CD4-positive, alpha-beta memory T cell (primary cell): ENCODE measurements at regions of chr1 and their contacts with region 1.

Region 1: GRCh38 chr1:180515864-180516388 is 13.5 kb upstream of the ACBD6 start:
- DNase-seq: peak; percentile 48 to 62 (median 55)
- H3K4me3 ChIP-seq: no peak overlapping the region
- H3K4me3 Mint-ChIP-seq: no peak overlapping the region
- H3K27ac ChIP-seq: no peak overlapping the region
- H3K27ac Mint-ChIP-seq: no peak overlapping the region
- H3K4me1 ChIP-seq: peaks cover 3% of the 10 kb centered on the region
- H3K4me1 Mint-ChIP-seq: peaks cover 0 to 2% (median 1%) of the 10 kb centered on the region in 4 donors
- H3K27me3 ChIP-seq: no peaks in the 10 kb centered on the region
- H3K27me3 Mint-ChIP-seq: peaks cover 4% of the 10 kb centered on the region in 2 donors

Region 2: GRCh38 chr1:180462102-180462501 is 53.8 kb before region 1 on chr1:
- CTCF ChIA-PET with region 1: no interaction called
- POLR2A ChIA-PET with region 1: no interaction called
- intact Hi-C with region 1: no loop called
- DNase-seq: no peak
- H3K4me3 ChIP-seq: no peak overlapping the region
- H3K4me3 Mint-ChIP-seq: peak overlapping the region in 2 of 8 donors; percentile 1 to 26
- H3K27ac ChIP-seq: no peak overlapping the region
- H3K27ac Mint-ChIP-seq: no peak overlapping the region
- H3K4me1 ChIP-seq: no peaks in the 10 kb centered on the region
- H3K4me1 Mint-ChIP-seq: peaks cover 11 to 28% (median 23%) of the 10 kb centered on the region in 4 donors
- H3K27me3 ChIP-seq: no peaks in the 10 kb centered on the region
- H3K27me3 Mint-ChIP-seq: no peaks in the 10 kb centered on the region

Region 3: GRCh38 chr1:180502360-180503273 is 13.3 kb before region 1 on chr1 and contains the start of gene ACBD6:
- CTCF ChIA-PET with region 1: interaction called, 45 read pairs
- POLR2A ChIA-PET with region 1: interaction called, 5 read pairs
- intact Hi-C with region 1: no loop called
- DNase-seq: peak; percentile 86 to 91 (median 88)
- H3K4me3 ChIP-seq: peak within 1 kb of the TSS; percentile 89 to 95
- H3K4me3 Mint-ChIP-seq: peak within 1 kb of the TSS; percentile 96 to 99 (median 98)
- H3K27ac ChIP-seq: peak within 1 kb of the TSS; percentile 71
- H3K27ac Mint-ChIP-seq: peak within 1 kb of the TSS; percentile 92 to 99 (median 97)
- H3K4me1 ChIP-seq: peaks cover 42% of the 10 kb centered on the region
- H3K4me1 Mint-ChIP-seq: peaks cover 23 to 42% (median 31%) of the 10 kb centered on the region in 4 donors
- H3K27me3 ChIP-seq: no peaks in the 10 kb centered on the region
- H3K27me3 Mint-ChIP-seq: no peaks in the 10 kb centered on the region
- total RNA-seq, gene ACBD6: 55.1 to 64.2 TPM